SK-N-SH (cell line): ENCODE measurements at regions of chr1 and their contacts with region 1.

Region 1: GRCh38 chr1:47997289-47998200 is at the start of gene TRABD2B:
- DNase-seq: peak; percentile 96
- H3K4me3 ChIP-seq: peak within 1 kb of the TSS; percentile 56 to 65
- H3K27ac ChIP-seq: no peak within 1 kb of the TSS
- H3K4me1 ChIP-seq: peaks cover 0 to 3% of the 10 kb centered on the region in 2 experiments; a peak in 1 of 4 replicates
- H3K27me3 ChIP-seq: peaks cover 4% of the 10 kb centered on the region; the same call in 1 of the 2 replicates
- CTCF ChIP-seq: peak; percentile 92
- EP300 ChIP-seq: no peak
- RAD21 ChIP-seq: peak; percentile 73
- polyA plus RNA-seq, gene TRABD2B: 0.02 and 0.03 TPM in 2 replicates

Region 2: GRCh38 chr1:47507881-47508701 is 489.5 kb before region 1 on chr1:
- CTCF ChIA-PET with region 1: no interaction called
- POLR2A ChIA-PET with region 1: no interaction called
- DNase-seq: peak; percentile 80
- H3K4me3 ChIP-seq: peak overlapping the region; percentile 44 to 46
- H3K27ac ChIP-seq: no peak overlapping the region
- H3K4me1 ChIP-seq: peaks cover 0 to 13% of the 10 kb centered on the region in 2 experiments; a peak in 1 of 4 replicates
- H3K27me3 ChIP-seq: peaks cover 31% of the 10 kb centered on the region
- CTCF ChIP-seq: no peak
- EP300 ChIP-seq: no peak
- RAD21 ChIP-seq: no peak

Region 3: GRCh38 chr1:47805921-47806361 is 191.6 kb before region 1 on chr1:
- CTCF ChIA-PET with region 1: interaction called, 14 read pairs
- POLR2A ChIA-PET with region 1: no interaction called
- DNase-seq: peak; percentile 77
- H3K4me3 ChIP-seq: no peak overlapping the region
- H3K27ac ChIP-seq: peak overlapping the region in 1 of 2 experiments; percentile 67; a peak in 2 of 4 replicates
- H3K4me1 ChIP-seq: peaks cover 0 to 26% of the 10 kb centered on the region in 2 experiments; a peak in 2 of 4 replicates
- H3K27me3 ChIP-seq: no peaks in the 10 kb centered on the region
- CTCF ChIP-seq: no peak
- EP300 ChIP-seq: peak in 1 of 2 experiments; percentile 74; a peak in 2 of 4 replicates
- RAD21 ChIP-seq: peak; percentile 29

Region 4: DNA sequence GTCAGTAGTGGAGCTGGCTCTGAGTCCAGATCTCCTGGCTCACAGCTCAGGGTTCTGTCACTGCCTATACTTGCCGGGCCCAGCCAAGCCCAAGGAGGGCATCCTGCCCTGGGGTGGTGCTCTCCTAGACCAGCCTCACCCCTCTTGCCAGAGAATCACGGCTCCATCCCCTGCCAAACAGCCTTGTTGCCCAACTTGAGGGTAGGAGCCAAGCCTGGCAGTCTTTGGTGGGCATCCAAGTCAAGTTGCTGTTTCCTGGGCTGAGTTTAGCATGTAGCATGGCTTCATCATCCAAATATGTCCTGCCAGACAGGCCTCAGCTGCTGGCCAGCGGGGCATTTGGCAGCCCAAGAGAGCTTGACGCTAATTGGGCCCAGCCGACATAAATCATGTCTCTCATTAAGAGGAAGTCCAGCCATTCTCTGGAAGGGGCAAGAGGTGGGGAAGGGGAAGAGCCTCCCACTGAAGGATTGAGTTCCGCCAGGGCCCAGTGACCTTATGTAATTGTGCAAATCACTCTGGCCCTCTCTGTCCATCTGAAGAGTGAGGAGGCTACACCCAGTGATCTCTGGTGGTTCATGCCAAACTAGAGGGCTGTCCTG is 22.3 kb after region 1 on chr1:
- CTCF ChIA-PET with region 1: interaction called, 15 read pairs
- POLR2A ChIA-PET with region 1: no interaction called
- DNase-seq: no peak
- H3K4me3 ChIP-seq: no peak overlapping the region
- H3K27ac ChIP-seq: no peak overlapping the region
- H3K4me1 ChIP-seq: peaks cover 0 to 9% of the 10 kb centered on the region in 2 experiments; a peak in 1 of 4 replicates
- H3K27me3 ChIP-seq: no peaks in the 10 kb centered on the region
- CTCF ChIP-seq: no peak
- EP300 ChIP-seq: no peak
- RAD21 ChIP-seq: no peak

Region 5: DNA sequence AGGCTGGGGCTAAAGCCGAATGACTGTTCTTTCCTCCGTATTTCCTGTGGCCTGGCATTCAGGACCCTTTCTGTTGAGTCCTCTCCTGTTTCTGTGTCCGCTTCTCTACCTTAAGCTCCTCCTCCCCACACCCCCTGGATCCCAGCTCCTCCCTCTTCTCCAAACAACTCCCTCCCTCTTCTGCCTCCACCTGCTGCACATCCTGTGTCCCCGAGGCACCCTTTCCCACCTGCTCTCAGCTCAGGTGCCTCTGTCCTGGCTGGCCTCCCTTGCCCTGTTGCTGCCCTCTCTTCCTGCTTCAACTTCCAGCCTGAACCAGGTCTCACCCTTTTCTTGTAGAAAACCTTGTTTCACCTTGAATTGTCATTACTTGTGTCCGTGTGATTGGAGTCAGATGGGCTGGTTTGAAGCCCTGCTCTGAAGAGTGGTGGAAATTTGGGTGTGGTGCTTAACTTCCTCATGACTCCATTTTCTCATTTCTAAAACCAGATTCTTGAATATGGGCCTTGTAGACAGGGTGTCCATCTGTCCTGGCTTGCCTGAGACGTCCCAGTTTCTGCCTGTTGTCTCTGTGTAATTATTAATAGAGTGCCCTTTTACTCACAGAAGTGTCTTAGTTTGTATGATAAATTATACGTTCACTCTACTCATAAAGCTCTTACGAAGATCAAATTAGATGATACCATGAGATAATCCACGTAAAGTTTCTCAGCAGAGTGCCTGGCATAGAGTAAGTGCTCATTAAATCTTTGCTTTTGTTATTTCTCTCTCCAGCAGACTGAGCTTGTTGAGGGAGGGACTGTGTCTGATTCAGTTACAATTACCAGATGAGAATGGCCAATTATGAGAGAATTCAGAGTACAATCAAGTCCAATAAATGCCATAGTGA is 58.6 kb after region 1 on chr1:
- CTCF ChIA-PET with region 1: interaction called, 92 read pairs
- POLR2A ChIA-PET with region 1: no interaction called
- DNase-seq: no peak
- H3K4me3 ChIP-seq: no peak overlapping the region
- H3K27ac ChIP-seq: no peak overlapping the region
- H3K4me1 ChIP-seq: peaks cover 6 to 22% of the 10 kb centered on the region in 2 experiments; a peak in 2 of 4 replicates
- H3K27me3 ChIP-seq: no peaks in the 10 kb centered on the region
- CTCF ChIP-seq: no peak
- EP300 ChIP-seq: no peak
- RAD21 ChIP-seq: no peak

Region 6: GRCh38 chr1:48093696-48094528 is 96.4 kb after region 1 on chr1:
- CTCF ChIA-PET with region 1: interaction called, 10 read pairs
- POLR2A ChIA-PET with region 1: no interaction called
- DNase-seq: peak; percentile 85
- H3K4me3 ChIP-seq: peak overlapping the region; percentile 7 to 44; a peak in 2 of 4 replicates
- H3K27ac ChIP-seq: no peak overlapping the region
- H3K4me1 ChIP-seq: peaks cover 0 to 3% of the 10 kb centered on the region in 2 experiments; a peak in 1 of 4 replicates
- H3K27me3 ChIP-seq: peaks cover 15% of the 10 kb centered on the region
- CTCF ChIP-seq: peak; percentile 71
- EP300 ChIP-seq: no peak
- RAD21 ChIP-seq: peak; percentile 69